Activated naive CD4-positive, alpha-beta T cell treated with anti-CD3 and anti-CD28 coated beads, Interleukin-2, amount 10 ng/mL, durations not matched to agents 7 days and 5 days (primary cell): ENCODE measurements at regions of chr1 and their contacts with region 1.

Region 1: GRCh38 chr1:2194898-2195673 is 514 bp upstream of the FAAP20 start:
- DNase-seq: peak; percentile 95
- H3K4me3 Mint-ChIP-seq: peak overlapping the region; percentile 77
- H3K27ac Mint-ChIP-seq: peak overlapping the region; percentile 93
- H3K4me1 Mint-ChIP-seq: peaks cover 43% of the 10 kb centered on the region
- H3K27me3 Mint-ChIP-seq: no peaks in the 10 kb centered on the region

Region 2: DNA sequence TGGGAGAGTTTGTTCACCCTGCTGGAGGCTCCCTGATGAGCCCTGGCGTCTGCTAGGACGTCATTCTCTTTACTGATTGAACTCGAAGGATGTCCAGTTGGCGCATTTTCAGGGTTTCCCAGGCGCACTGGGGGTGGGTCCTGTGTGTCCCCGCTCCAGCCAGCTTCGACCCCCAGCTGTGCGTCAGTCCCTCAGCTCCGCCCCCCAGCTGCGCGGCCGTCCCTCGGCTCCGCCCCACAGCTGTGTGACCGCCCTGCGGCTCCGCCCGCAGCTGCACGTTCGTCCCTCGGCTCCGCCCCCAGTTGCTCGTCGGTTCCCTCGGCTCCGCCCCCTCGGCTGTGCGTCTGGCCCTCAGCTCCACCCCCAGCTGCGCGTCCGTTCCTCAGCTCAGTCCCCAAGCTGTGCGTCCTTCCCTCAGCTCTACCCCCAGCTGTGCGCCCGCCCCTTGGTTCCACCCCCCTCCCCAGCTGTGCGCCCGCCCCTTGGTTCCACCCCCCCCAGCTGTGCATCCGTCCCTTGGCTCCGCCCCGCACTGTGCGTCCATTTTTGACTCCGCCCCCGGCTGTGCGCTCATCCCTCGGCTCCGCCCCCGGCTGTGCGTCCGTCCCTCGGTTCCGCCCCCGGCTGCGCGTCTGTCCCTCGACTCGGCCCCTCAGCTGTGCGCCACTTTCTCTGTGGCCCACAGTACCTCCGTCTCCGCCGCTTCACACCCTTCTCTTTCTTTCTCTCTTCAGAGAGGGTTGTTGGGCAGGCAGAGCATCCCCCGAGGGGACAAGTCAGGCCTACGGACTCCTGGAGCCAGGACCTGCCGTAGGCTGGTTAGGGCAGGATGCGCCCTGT is 61.8 kb before region 1 on chr1:
- CTCF ChIA-PET with region 1: no interaction called
- DNase-seq: peak; percentile 98
- H3K4me3 Mint-ChIP-seq: peak overlapping the region; percentile 74
- H3K27ac Mint-ChIP-seq: peak overlapping the region; percentile 87
- H3K4me1 Mint-ChIP-seq: peaks cover 22% of the 10 kb centered on the region
- H3K27me3 Mint-ChIP-seq: peaks cover 40% of the 10 kb centered on the region

Region 3: DNA sequence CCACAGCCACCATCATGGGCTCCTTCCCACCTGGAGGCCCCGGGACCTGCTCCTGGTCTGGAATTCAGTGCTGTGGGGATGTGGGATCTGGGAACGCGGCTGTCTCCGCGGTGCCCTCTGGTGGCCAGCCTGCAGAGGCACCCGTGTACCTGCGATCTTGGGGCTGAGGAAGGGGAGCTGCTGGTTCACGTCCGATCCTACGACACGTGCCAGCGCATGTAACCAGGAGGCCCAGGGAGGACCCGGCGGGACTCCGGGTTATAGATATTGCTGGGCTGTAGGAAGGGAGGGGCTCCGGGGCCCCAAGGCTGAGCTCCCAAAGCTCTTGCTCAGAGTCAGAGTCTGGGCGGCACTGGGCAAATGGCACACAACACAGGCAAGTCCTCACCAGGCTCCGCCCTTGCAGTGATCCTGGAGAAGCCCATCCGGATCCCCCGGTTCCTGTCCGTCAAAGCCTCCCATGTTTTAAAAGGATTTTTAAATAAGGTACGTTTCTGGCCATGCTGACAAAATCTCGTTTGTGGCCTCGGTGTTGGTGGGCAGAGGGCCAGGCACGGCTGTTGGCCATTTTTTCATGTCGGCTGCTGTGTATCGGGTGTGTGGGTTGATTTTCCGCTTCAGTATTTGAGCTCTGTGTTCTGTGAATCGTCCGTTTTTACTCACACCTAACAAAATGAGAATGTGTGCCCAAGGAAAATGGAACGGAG is 20.6 kb before region 1 on chr1:
- CTCF ChIA-PET with region 1: interaction called, 14 read pairs
- DNase-seq: peak; percentile 55
- H3K4me3 Mint-ChIP-seq: no peak overlapping the region
- H3K27ac Mint-ChIP-seq: no peak overlapping the region
- H3K4me1 Mint-ChIP-seq: peaks cover 2% of the 10 kb centered on the region
- H3K27me3 Mint-ChIP-seq: no peaks in the 10 kb centered on the region

Region 4: DNA sequence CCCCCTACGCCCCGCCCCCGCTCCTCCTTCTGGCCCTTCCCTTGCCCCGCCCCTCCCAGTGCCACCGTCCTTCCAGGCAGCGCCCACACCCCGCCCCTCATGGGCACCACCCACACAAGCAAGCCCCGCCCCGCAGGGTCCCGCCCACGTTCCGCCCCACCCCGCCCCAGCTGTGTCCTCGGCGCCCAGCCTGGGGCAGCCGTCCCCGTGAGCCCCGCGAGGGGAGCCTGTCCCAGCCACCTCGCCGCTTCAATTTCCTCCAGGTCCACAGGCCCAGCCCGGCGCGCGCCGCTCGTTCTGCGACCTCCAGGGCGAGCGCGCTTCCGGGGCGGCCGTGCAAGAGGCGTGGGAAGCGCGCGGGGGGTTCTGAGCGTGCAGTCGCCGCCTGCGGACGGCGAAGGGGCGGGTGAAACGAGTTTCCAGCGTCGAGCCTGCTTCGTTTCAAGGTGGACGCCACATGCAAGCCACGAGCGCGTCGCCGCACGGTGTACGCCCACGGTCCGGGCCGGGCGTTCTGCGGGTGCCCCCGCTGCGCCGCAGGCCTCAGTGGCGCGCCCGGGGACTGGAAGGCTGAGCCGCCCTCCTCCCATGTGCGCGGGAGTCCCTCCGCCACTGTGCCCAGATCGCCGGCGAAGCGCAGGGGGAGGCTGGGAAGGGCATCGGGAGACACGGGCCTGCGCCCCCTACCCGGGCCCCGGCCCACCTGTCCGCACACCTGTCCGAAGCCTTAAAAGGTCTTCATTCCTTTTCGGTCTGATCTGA is 10.3 kb after region 1 on chr1:
- CTCF ChIA-PET with region 1: interaction called, 11 read pairs
- DNase-seq: peak; percentile 96
- H3K4me3 Mint-ChIP-seq: peak overlapping the region; percentile 60
- H3K27ac Mint-ChIP-seq: peak overlapping the region; percentile 52
- H3K4me1 Mint-ChIP-seq: peaks cover 13% of the 10 kb centered on the region
- H3K27me3 Mint-ChIP-seq: peaks cover 33% of the 10 kb centered on the region

Region 5: DNA sequence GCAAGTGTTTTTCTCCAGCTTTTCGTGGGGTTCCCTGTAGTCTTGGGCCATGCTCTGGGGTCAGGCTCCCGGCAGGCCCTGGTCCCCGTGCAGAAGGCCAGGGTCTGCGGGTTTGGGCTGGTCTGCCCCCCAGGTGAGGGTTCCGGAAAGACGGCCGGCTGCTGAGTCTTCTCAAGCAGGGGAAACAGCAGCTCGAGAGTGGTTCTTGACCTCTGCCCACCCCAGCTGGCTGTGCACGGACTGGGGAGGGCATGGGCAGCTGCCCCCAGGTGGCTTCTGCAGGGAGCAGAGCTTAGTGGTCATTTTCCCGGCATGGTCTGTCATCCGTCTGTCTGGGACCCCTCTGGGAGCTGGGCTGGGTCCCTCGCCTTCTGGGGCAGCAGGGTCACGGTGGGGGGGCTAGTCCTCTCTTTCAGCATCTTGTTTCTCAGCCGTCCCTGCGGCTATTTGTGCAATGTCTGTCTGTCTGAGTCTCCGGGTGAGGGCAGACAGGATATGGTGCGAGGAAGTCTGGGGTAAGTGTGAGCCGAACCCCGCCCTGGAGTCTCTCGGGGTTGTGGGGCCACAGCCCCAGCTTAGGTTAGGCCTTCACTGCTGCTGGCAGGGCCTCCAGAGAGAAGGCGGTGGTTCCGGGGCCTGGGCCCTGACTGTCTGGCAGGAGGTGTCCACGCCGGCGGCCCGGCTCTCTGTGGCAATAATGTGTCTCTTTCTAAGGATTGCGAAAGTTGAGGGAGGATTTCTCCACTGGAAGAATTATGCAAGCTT is 39.1 kb after region 1 on chr1:
- CTCF ChIA-PET with region 1: interaction called, 25 read pairs
- DNase-seq: peak; percentile 86
- H3K4me3 Mint-ChIP-seq: peak overlapping the region; percentile 96
- H3K27ac Mint-ChIP-seq: peak overlapping the region; percentile 96
- H3K4me1 Mint-ChIP-seq: peaks cover 68% of the 10 kb centered on the region
- H3K27me3 Mint-ChIP-seq: no peaks in the 10 kb centered on the region

Region 6: DNA sequence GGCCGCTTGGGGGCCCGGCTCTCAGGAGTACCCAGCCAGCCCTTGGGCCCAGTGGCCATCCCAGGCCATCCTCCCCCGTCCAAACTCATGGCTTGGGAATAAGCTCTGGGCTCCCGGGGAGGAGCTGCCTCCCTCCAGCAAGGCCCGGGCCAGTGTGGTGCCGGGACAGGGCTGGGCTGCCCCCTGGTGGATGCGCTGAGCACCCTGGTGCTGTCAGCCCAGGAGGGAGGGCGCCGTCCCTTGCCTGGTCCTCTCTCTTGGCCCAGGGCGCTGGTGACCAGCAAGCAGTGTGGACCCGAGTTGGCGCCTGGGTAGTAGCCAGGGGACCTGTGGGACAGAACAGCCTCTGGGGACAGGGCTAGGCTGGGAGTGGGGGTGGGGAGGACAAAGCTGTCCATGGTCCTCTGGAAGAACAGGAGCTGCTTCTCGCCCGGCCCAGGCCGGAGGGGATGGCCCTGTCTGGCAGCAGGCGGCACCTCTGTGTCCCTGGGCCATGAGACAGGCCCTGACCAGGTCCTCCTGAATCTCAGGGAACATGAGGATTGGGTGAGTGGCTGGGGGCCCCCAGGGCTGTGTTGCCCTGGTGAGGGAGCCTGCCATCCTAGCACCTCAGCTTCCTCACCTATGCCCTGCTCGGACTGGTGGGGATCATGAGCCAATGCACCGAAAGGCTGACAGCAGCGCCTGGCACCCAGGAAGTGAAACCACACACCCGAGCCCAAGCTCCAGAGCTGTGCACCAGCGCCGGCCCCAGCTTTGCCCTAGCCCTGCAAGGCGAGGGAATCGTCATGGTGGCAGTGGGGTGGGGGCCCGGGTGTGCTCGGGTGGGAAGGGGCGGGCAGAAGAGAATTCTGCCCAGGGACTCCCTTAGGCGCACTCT is 186.9 kb after region 1 on chr1:
- CTCF ChIA-PET with region 1: interaction called, 217 read pairs
- DNase-seq: peak; percentile 87
- H3K4me3 Mint-ChIP-seq: no peak overlapping the region
- H3K27ac Mint-ChIP-seq: no peak overlapping the region
- H3K4me1 Mint-ChIP-seq: peaks cover 6% of the 10 kb centered on the region
- H3K27me3 Mint-ChIP-seq: no peaks in the 10 kb centered on the region

Region 7: GRCh38 chr1:2391041-2391930 is 196.2 kb after region 1 on chr1 and contains the starts of genes MORN1 and RER1:
- CTCF ChIA-PET with region 1: interaction called, 22 read pairs
- DNase-seq: peak; percentile 99
- H3K4me3 Mint-ChIP-seq: peak within 1 kb of the TSS; percentile 81
- H3K27ac Mint-ChIP-seq: peak within 1 kb of the TSS; percentile 88
- H3K4me1 Mint-ChIP-seq: peaks cover 42% of the 10 kb centered on the region
- H3K27me3 Mint-ChIP-seq: no peaks in the 10 kb centered on the region